CD4-positive, alpha-beta memory T cell (primary cell): ENCODE measurements at regions of chr2 and their contacts with region 1.

Region 1: GRCh38 chr2:206556357-206556949 is 85.8 kb upstream of the FAM237A start:
- DNase-seq: peak in 4 of 5 donors; percentile 34 to 39 (median 37)
- H3K4me3 ChIP-seq: no peak overlapping the region
- H3K4me3 Mint-ChIP-seq: no peak overlapping the region
- H3K27ac ChIP-seq: no peak overlapping the region
- H3K27ac Mint-ChIP-seq: no peak overlapping the region
- H3K4me1 ChIP-seq: peaks cover 31% of the 10 kb centered on the region
- H3K4me1 Mint-ChIP-seq: peaks cover 24 to 35% (median 31%) of the 10 kb centered on the region in 4 donors
- H3K27me3 ChIP-seq: no peaks in the 10 kb centered on the region
- H3K27me3 Mint-ChIP-seq: no peaks in the 10 kb centered on the region

Region 2: DNA sequence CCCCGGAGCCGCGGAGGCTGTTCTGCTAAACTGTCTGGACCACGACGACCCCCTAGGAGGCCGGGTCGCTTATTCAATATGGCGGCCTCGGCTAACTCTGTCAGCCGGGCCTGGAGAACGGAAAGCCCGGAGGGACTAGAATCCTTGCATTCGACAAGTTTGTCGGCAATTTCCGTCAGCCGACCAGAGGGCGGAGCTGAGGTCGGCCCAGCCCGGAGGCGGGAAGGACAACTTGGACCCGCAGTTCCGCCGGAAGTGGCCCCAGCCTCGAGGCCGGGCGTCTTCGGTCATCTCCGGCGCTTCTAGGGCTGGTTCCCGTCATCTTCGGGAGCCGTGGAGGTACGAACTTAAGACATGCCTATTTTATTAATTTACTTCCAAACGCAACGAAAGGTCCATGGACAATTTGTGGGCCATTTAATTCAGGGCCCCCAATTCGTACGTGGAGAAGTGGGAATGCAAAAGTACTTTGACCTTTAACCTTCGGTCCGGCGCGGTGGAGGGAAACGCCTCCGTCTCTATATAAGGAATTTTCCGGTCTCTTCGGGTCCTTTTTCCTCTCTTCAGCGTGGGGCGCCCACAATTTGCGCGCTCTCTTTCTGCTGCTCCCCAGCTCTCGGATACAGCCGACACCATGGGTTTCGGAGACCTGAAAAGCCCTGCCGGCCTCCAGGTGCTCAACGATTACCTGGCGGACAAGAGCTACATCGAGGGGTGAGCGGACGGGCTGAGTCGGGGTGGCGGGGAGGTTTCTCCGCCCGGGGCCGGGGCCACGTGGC is 396.9 kb before region 1 on chr2 and contains the starts of genes EEF1B2 and NDUFS1:
- CTCF ChIA-PET with region 1: interaction called, 19 read pairs
- POLR2A ChIA-PET with region 1: interaction called, 5 read pairs
- intact Hi-C with region 1: loop called (anchors 2 kb)
- DNase-seq: peak; percentile 96 to 97 (median 97)
- H3K4me3 ChIP-seq: peak within 1 kb of the TSS; percentile 69 to 78
- H3K4me3 Mint-ChIP-seq: peak within 1 kb of the TSS; percentile 97 to 100 (median 100)
- H3K27ac ChIP-seq: peak within 1 kb of the TSS; percentile 94
- H3K27ac Mint-ChIP-seq: peak within 1 kb of the TSS; percentile 98 to 100 (median 99)
- H3K4me1 ChIP-seq: peaks cover 47% of the 10 kb centered on the region
- H3K4me1 Mint-ChIP-seq: peaks cover 38 to 71% (median 56%) of the 10 kb centered on the region in 4 donors
- H3K27me3 ChIP-seq: no peaks in the 10 kb centered on the region
- H3K27me3 Mint-ChIP-seq: no peaks in the 10 kb centered on the region
- total RNA-seq, gene EEF1B2: 947 to 1,026 TPM
- total RNA-seq, gene NDUFS1: 53.4 to 57.6 TPM

Region 3: DNA sequence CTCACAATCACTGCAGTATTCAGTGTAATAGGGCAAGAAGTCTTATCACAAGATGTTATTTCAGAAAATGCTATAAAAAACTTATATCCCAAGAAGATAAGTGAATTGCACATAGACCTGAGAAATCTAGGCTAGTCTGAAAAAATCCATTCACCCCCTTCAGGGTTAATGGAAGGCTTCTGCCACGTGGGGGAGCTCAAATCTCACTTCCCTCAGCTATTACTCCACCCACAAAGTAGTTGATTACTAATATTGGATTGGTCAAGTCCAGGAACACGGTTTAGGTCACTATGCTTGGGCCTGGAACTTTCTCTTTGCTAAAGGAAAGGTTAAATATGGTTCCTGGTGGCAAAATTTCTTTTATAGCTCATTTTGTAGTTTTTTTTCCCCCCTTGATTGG is 164.3 kb before region 1 on chr2:
- CTCF ChIA-PET with region 1: interaction called, 72 read pairs
- POLR2A ChIA-PET with region 1: interaction called, 5 read pairs
- intact Hi-C with region 1: loop called (anchors 1 kb)
- DNase-seq: peak in 4 of 5 donors; percentile 11 to 23 (median 18)
- H3K4me3 ChIP-seq: no peak overlapping the region
- H3K4me3 Mint-ChIP-seq: no peak overlapping the region
- H3K27ac ChIP-seq: no peak overlapping the region
- H3K27ac Mint-ChIP-seq: no peak overlapping the region
- H3K4me1 ChIP-seq: no peaks in the 10 kb centered on the region
- H3K4me1 Mint-ChIP-seq: peaks cover 0 to 4% (median 0%) of the 10 kb centered on the region in 4 donors
- H3K27me3 ChIP-seq: no peaks in the 10 kb centered on the region
- H3K27me3 Mint-ChIP-seq: no peaks in the 10 kb centered on the region

Region 4: DNA sequence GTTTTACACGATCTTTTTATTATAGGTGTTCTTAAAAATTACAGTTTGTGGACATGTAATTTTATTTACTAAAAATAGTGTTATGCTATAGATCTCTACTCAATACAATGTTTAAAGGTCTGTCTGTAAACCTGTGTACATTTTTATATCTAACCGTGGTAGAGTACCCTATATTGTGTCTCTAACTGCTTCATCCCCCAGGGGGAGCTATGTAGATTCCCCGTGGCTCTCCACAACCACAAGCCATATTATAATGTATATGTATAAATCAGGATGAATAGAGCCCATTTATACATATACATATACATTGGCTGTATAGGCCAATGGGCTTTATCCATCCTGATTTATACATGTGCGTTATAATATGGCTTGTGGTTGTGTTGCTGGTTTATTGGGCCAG is 53.7 kb before region 1 on chr2:
- CTCF ChIA-PET with region 1: interaction called, 21 read pairs
- POLR2A ChIA-PET with region 1: interaction called, 3 read pairs
- intact Hi-C with region 1: loop called (anchors 2 kb)
- DNase-seq: no peak
- H3K4me3 ChIP-seq: no peak overlapping the region
- H3K4me3 Mint-ChIP-seq: no peak overlapping the region
- H3K27ac ChIP-seq: no peak overlapping the region
- H3K27ac Mint-ChIP-seq: no peak overlapping the region
- H3K4me1 ChIP-seq: peaks cover 3% of the 10 kb centered on the region
- H3K4me1 Mint-ChIP-seq: peaks cover 4 to 15% (median 5%) of the 10 kb centered on the region in 4 donors
- H3K27me3 ChIP-seq: no peaks in the 10 kb centered on the region
- H3K27me3 Mint-ChIP-seq: no peaks in the 10 kb centered on the region

Region 5: DNA sequence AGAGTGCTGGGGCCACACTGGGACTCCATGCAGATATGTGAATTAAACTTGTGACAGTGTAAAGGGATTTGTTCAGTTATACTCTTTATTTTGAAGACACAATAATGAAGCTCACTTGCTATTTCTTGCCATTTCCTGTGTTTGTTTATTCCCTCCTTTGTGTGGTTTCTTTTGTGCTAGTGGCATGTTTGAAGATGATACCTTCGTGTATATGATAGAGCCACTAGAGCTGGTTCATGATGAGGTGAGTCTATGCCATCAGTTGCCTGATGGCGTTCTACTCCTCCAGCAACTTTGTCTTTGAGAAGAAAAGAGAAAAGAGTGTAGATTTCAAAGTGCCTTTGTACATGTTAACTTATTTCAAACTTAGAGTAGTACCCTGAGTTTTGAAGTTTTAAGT is 13.4 kb before region 1 on chr2:
- CTCF ChIA-PET with region 1: interaction called, 23 read pairs
- POLR2A ChIA-PET with region 1: interaction called, 11 read pairs
- intact Hi-C with region 1: no loop called
- DNase-seq: peak in 4 of 5 donors; percentile 33 to 40 (median 36)
- H3K4me3 ChIP-seq: no peak overlapping the region
- H3K4me3 Mint-ChIP-seq: peak overlapping the region in 5 of 8 donors; percentile 2 to 39 (median 22)
- H3K27ac ChIP-seq: no peak overlapping the region
- H3K27ac Mint-ChIP-seq: peak overlapping the region in 4 of 7 donors; percentile 2 to 83 (median 37)
- H3K4me1 ChIP-seq: peaks cover 9% of the 10 kb centered on the region
- H3K4me1 Mint-ChIP-seq: peaks cover 16 to 33% (median 18%) of the 10 kb centered on the region in 4 donors
- H3K27me3 ChIP-seq: no peaks in the 10 kb centered on the region
- H3K27me3 Mint-ChIP-seq: peaks cover 0 to 3% of the 10 kb centered on the region in 2 donors

Region 6: GRCh38 chr2:206765242-206766056 is 209.0 kb after region 1 on chr2 and contains the starts of genes FASTKD2 and MDH1B:
- CTCF ChIA-PET with region 1: interaction called, 3 read pairs
- POLR2A ChIA-PET with region 1: no interaction called
- intact Hi-C with region 1: loop called (anchors 5 kb)
- DNase-seq: peak; percentile 88 to 91 (median 89)
- H3K4me3 ChIP-seq: peak within 1 kb of the TSS; percentile 54 to 82
- H3K4me3 Mint-ChIP-seq: peak within 1 kb of the TSS; percentile 89 to 98 (median 95)
- H3K27ac ChIP-seq: peak within 1 kb of the TSS; percentile 91
- H3K27ac Mint-ChIP-seq: peak within 1 kb of the TSS; percentile 96 to 99 (median 97)
- H3K4me1 ChIP-seq: peaks cover 39% of the 10 kb centered on the region
- H3K4me1 Mint-ChIP-seq: peaks cover 20 to 45% (median 36%) of the 10 kb centered on the region in 4 donors
- H3K27me3 ChIP-seq: no peaks in the 10 kb centered on the region
- H3K27me3 Mint-ChIP-seq: no peaks in the 10 kb centered on the region
- total RNA-seq, gene FASTKD2: 23.0 to 23.4 TPM
- total RNA-seq, gene MDH1B: 0.17 TPM in 1 of 2 experiments, not detected in the other

Region 7: DNA sequence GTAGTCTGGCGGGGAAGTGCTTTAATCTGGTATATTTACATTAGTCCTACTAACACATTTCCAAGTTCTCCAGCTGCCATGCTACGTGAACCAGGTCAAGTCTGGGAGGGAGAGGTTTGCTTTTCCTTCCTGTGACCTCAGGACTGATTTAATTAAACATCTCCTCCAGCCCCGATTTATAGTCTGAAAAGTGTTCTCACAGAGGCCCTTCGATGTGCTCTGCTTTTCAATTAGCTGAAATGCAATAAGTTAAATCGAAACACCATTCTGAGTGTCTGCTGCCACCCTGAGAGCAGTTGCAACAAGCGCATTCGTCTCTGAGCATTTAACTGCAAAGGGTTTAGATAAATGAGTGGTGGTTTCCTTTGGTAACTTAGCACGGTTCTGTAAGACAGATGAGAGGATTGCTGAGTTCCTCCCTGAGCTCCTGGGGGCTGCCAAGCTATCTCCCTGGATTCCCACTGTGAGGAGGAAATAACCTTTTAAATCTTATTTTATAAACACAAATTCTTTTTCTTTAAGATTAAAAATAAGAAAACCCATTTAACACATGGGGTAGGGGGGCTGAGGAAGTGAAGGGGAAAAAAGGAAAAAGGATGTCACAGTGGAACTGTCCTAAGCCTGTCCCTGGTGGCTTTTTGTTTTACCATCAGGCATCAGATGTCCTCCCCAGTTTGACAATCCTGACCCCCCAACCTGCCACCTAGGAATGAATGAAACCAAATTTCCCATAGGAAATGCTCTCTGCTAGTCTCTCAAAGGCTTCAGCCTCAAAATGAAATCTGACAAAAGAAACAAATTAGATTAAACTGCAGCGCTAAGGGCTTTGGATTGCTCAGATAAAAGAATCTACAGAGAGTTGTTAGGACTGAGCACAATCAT is 916.8 kb after region 1 on chr2:
- CTCF ChIA-PET with region 1: no interaction called
- POLR2A ChIA-PET with region 1: no interaction called
- intact Hi-C with region 1: loop called (anchors 5 kb)
- DNase-seq: peak; percentile 22 to 39 (median 38)
- H3K4me3 ChIP-seq: no peak overlapping the region
- H3K4me3 Mint-ChIP-seq: no peak overlapping the region
- H3K27ac ChIP-seq: no peak overlapping the region
- H3K27ac Mint-ChIP-seq: peak overlapping the region in 1 of 7 donors; percentile 32
- H3K4me1 ChIP-seq: peaks cover 6% of the 10 kb centered on the region
- H3K4me1 Mint-ChIP-seq: peaks cover 4 to 11% (median 9%) of the 10 kb centered on the region in 4 donors
- H3K27me3 ChIP-seq: no peaks in the 10 kb centered on the region
- H3K27me3 Mint-ChIP-seq: no peaks in the 10 kb centered on the region